AG04450 (cell line): ENCODE measurements at regions of chr20 and their contacts with region 1.

Region 1: DNA sequence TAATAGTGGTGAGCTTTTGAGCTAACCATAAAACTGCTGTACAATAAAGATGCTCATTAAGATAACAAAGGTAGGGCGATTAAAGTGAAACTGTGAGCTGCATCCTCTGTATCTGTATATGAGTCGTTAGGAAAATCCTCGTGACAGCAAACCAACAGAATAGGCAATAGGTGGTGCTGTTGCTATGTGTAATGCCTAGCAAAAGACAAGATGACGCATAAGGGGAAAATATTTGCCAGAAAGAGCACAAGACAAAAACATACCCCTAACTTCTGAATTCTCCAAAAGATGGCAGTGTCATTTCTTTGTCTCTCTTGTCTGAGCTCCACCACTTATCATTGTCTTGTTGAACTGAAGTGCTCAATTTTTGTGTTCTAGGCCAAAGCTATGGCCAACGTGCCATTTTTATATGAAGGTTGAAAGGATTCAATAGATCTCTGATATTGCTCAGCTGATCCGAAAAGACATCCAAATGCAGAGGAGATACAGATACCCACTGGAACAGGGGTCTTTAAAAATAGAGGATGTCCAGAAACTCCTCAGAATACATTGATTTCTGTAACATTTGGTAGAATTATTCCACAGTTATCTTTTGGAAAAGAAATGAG is 56.3 kb upstream of the ANKEF1 start:
- DNase-seq: peak; percentile 76
- H3K4me3 ChIP-seq: no peak overlapping the region
- H3K27ac ChIP-seq: no peak overlapping the region
- H3K27me3 ChIP-seq: no peaks in the 10 kb centered on the region
- CTCF ChIP-seq: peak; percentile 86

Region 2: DNA sequence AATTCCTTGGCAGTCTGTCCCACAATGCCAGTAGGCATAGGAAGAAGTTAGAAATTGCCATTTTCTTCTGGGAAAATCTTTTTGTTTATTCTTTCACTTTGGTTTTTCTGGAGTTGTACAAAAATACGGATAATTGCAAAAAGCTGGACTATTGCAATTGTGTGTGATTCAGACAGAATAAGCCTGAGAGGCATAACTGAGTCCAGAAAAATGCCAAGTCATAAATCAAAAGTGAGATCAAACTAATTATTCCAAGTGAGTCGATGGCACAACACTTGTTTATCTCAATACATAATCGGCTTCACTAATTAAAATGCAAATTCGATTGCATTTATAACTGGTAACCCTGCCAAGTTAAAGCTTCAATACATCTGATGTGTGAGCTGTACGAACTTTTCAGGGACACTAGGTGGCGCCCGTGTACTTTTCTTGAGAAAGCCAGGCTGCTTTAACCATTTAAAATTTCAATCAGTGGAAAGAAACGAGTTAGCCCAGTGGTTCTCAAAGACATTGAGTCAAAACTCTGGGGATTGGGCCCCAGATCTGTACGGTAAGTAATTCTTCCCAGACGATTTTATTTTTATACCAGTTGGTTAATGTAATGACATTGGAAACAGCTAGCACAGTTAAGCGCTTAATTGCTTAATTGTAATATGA is 361.5 kb before region 1 on chr20:
- CTCF ChIA-PET with region 1: interaction called, 10 read pairs
- POLR2A ChIA-PET with region 1: no interaction called
- DNase-seq: peak; percentile 23
- H3K4me3 ChIP-seq: no peak overlapping the region
- H3K27ac ChIP-seq: no peak overlapping the region
- H3K27me3 ChIP-seq: peaks cover 13% of the 10 kb centered on the region
- CTCF ChIP-seq: peak; percentile 76

Region 3: GRCh38 chr20:9996944-9997343 is 18.4 kb after region 1 on chr20:
- CTCF ChIA-PET with region 1: interaction called, 14 read pairs
- POLR2A ChIA-PET with region 1: no interaction called
- DNase-seq: no peak
- H3K4me3 ChIP-seq: no peak overlapping the region
- H3K27ac ChIP-seq: no peak overlapping the region
- H3K27me3 ChIP-seq: no peaks in the 10 kb centered on the region
- CTCF ChIP-seq: no peak

Region 4: DNA sequence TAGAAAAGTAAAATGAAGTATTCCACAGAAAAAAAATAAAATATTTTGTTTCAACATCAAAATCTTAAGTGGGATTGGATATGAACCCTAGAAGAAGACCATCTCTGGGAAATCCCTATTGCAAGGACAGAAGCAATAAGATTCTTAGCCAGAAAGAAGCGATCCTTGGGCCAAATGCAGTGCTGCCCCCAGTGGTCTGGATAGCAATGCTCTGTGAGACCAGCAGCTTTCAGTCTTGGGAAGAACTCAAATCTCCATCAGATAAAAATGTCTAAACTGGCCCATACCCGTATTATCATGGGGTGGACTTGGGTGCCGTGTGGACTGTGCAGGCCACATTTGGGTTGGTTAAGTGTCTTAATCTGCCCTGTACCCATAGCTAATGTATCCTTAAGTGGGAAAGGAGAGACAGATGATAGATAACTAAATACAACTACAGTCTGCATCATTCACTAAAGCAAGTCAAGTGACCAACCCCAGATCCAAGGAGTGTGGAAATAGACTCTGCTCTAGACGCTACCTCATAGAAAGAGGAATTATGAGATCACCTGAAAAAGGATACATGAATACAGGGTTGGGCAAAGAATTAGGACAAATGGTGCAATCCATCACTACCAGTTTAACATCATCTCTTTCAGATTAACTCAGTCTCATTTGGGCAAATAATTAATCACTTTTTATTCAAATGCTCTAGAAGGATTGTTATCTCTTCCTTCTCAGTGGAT is 201.2 kb after region 1 on chr20:
- CTCF ChIA-PET with region 1: no interaction called
- POLR2A ChIA-PET with region 1: no interaction called
- DNase-seq: no peak
- H3K4me3 ChIP-seq: no peak overlapping the region
- H3K27ac ChIP-seq: peak overlapping the region; percentile 55
- H3K27me3 ChIP-seq: no peaks in the 10 kb centered on the region
- CTCF ChIP-seq: peak; percentile 63

Region 5: GRCh38 chr20:10213526-10213925 is 235.0 kb after region 1 on chr20:
- CTCF ChIA-PET with region 1: interaction called, 11 read pairs
- POLR2A ChIA-PET with region 1: no interaction called
- DNase-seq: no peak
- H3K4me3 ChIP-seq: no peak overlapping the region
- H3K27ac ChIP-seq: no peak overlapping the region
- H3K27me3 ChIP-seq: no peaks in the 10 kb centered on the region
- CTCF ChIP-seq: no peak

Region 6: DNA sequence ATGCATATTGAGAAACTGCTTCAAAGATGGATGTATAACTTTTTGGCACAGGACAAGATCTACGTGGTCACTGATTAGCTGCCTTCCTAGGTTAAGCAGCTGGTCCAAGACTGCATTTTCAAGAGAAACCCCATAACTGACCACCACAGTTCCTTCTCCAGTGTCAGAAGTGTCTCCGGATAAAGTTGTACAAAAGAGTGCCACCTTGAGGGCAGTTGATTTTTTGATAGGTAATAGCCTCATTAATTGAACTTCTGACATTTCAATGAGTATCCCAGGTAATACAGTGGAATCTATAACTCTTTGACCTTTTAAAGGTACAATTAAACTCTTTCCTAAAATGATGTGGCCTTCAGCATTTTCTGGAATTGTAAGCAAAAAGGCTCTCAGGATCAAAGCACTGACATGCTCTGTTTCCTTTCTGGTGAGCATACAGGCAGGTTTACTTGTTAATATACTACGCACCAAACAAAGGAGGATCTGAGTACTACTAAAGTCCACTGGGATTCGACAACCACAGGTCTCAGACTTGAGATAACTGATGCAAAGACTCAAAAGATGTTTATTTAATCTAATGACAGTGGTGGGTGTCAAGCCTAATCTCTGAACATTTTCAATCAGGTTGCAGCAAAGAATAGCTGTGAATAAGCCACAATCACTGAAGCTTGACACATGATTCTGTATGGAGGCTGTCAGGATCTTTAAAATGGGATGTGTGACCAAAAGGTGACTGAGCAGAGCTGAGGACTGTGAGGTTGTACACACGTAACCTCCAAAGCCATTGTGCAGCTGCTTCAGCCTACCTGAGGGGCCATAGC is 434.3 kb after region 1 on chr20:
- CTCF ChIA-PET with region 1: interaction called, 16 read pairs
- POLR2A ChIA-PET with region 1: no interaction called
- DNase-seq: no peak
- H3K4me3 ChIP-seq: no peak overlapping the region
- H3K27ac ChIP-seq: no peak overlapping the region
- H3K27me3 ChIP-seq: no peaks in the 10 kb centered on the region
- CTCF ChIP-seq: peak; percentile 37

Region 7: GRCh38 chr20:11544029-11544678 is 1565.7 kb after region 1 on chr20:
- CTCF ChIA-PET with region 1: interaction called, 10 read pairs
- POLR2A ChIA-PET with region 1: no interaction called
- DNase-seq: peak; percentile 37
- H3K4me3 ChIP-seq: peak overlapping the region; percentile 17
- H3K27ac ChIP-seq: no peak overlapping the region
- H3K27me3 ChIP-seq: no peaks in the 10 kb centered on the region
- CTCF ChIP-seq: peak; percentile 63